ENCODE measurements at regions of chr2 and their contacts with region 1.

Region 1: DNA sequence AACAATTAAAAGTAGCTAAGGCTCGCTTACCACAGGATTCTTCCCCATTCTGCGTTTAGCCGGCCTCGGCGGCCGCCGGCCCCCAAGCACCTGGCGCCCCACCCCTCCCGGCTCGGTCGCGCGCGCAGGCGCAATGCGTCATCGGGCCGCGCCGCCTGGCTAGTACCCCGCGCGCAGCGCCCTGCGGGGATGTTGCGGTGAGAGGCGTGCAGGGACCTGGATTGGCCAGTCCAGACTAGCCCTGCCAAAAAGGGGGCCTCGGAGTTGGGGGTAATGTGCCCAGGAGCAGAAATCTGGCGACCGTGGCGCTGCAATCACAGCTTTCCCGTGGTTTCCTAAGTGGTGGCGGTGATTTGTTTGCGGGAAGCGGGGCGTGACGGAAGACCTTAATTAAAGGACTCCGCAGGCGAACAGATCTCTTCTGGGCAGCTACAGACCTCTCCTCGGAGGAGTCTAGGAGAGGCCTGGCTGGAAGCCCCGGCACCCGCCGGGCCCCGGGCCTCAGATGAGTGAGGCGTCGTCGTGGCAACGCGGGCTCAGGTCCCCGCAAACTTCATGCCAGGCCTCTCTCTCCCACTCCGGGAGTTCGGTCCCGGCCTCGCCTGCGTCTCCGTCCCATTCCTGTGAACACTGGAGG is 606 bp downstream of the TMEM237 start:
- DNase-seq: peak; percentile 81 to 94 (median 92)
- ATAC-seq: peak; percentile 94
- H3K4me3 ChIP-seq: peak overlapping the region; percentile 95
- H3K4me3 Mint-ChIP-seq: peak overlapping the region; percentile 86 to 99 (median 96)
- H3K27ac ChIP-seq: peak overlapping the region; percentile 87
- H3K27ac Mint-ChIP-seq: peak overlapping the region; percentile 76 to 100 (median 97)
- H3K4me1 ChIP-seq: peaks cover 3 to 5% of the 10 kb centered on the region in 2 donors
- H3K4me1 Mint-ChIP-seq: peaks cover 5 to 21% (median 12%) of the 10 kb centered on the region in 7 donors
- H3K27me3 ChIP-seq: no peaks in the 10 kb centered on the region
- H3K27me3 Mint-ChIP-seq: peaks cover 0 to 4% (median 0%) of the 10 kb centered on the region in 5 donors

Region 2: DNA sequence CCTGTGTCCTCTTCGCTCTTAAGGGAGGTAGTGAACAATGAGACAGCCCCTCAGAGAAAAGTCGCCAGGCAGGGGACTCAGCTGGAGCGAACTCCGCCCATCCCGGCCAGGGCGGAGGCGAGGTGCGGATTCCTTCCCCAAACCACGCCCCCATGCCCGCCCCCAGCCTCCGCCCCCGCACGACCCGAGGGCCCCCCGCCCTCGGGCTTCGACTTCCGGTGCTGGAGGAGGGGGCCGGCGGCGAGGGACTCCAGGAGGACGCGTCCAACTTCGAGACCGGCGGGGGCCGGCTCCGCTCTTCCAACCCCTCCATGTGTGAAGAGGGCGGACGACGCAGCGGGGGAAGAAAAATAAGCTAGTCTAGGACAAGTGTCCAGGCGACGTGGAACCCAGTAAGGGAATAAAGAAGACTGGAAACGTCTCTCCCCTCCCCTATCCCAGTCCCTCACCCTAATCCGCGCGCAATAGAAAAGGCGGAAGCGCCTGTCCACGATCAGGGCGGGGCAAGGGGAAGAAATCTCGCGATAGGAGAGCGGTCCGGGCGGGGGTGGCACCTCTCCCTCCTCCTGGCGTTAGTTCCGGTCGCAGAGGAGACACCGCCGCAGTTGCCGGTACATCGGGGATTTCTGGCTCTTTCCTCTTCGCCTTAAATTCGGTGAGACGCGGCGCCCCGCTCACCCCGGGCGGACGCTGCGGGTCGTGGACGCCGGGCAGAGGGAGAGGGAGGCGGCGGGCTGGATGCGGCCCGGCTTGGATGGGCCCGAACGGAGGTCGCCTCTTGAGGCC is 831.2 kb before region 1 on chr2 and contains the start of gene BZW1:
- CTCF ChIA-PET with region 1: no interaction called
- POLR2A ChIA-PET with region 1: no interaction called
- intact Hi-C with region 1: loop called in 1 of 2 experiments (anchors 2 kb)
- DNase-seq: peak; percentile 92 to 99 (median 98)
- ATAC-seq: peak; percentile 91
- H3K4me3 ChIP-seq: peak within 1 kb of the TSS; percentile 89
- H3K4me3 Mint-ChIP-seq: peak within 1 kb of the TSS; percentile 89 to 99 (median 98)
- H3K27ac ChIP-seq: peak within 1 kb of the TSS; percentile 99
- H3K27ac Mint-ChIP-seq: peak within 1 kb of the TSS; percentile 91 to 99 (median 98)
- H3K4me1 ChIP-seq: peaks cover 19 to 24% of the 10 kb centered on the region in 2 donors
- H3K4me1 Mint-ChIP-seq: peaks cover 30 to 56% (median 48%) of the 10 kb centered on the region in 7 donors
- H3K27me3 ChIP-seq: no peaks in the 10 kb centered on the region
- H3K27me3 Mint-ChIP-seq: peaks cover 0 to 2% (median 0%) of the 10 kb centered on the region in 5 donors
- total RNA-seq, gene BZW1: 127 to 246 (median 207) TPM

Region 3: GRCh38 chr2:201406077-201406662 is 236.5 kb before region 1 on chr2:
- CTCF ChIA-PET with region 1: no interaction called
- POLR2A ChIA-PET with region 1: no interaction called
- intact Hi-C with region 1: loop called in 1 of 2 experiments (anchors 5 kb)
- DNase-seq: no peak
- ATAC-seq: no peak
- H3K4me3 ChIP-seq: no peak overlapping the region
- H3K4me3 Mint-ChIP-seq: peak overlapping the region in 4 of 10 donors; percentile 19 to 54 (median 22)
- H3K27ac ChIP-seq: peak overlapping the region; percentile 36
- H3K27ac Mint-ChIP-seq: peak overlapping the region in 5 of 9 donors; percentile 16 to 81 (median 28)
- H3K4me1 ChIP-seq: peaks cover 0 to 21% of the 10 kb centered on the region in 2 donors
- H3K4me1 Mint-ChIP-seq: peaks cover 13 to 61% (median 50%) of the 10 kb centered on the region in 7 donors
- H3K27me3 ChIP-seq: no peaks in the 10 kb centered on the region
- H3K27me3 Mint-ChIP-seq: no peaks in the 10 kb centered on the region

Region 4: DNA sequence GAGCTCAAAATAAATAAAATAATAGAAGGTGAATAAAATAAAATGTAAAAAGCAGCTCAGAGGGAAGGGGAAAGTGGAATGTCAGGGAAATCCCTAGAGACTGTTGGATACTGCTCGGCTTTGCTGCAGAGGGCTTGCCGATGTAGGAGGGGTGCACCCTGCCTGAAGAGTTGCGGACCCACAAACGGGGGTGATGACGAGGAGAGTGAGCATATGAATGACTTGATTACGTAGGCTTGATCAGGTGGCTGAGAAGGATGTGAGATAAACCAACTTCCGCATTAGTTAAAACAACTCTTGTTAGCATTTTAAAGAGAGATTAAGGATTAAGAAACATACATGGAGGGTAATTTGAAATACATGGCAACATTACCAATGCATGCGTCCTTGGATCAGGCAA is 21.6 kb after region 1 on chr2:
- CTCF ChIA-PET with region 1: no interaction called
- POLR2A ChIA-PET with region 1: no interaction called
- intact Hi-C with region 1: no loop called
- DNase-seq: no peak
- ATAC-seq: no peak
- H3K4me3 ChIP-seq: no peak overlapping the region
- H3K4me3 Mint-ChIP-seq: no peak overlapping the region
- H3K27ac ChIP-seq: no peak overlapping the region
- H3K27ac Mint-ChIP-seq: no peak overlapping the region
- H3K4me1 ChIP-seq: no peaks in the 10 kb centered on the region
- H3K4me1 Mint-ChIP-seq: no peaks in the 10 kb centered on the region
- H3K27me3 ChIP-seq: no peaks in the 10 kb centered on the region
- H3K27me3 Mint-ChIP-seq: peaks cover 0 to 8% (median 0%) of the 10 kb centered on the region in 5 donors

Region 5: GRCh38 chr2:202033321-202034248 is 390.9 kb after region 1 on chr2 and contains the start of gene FZD7:
- CTCF ChIA-PET with region 1: no interaction called
- POLR2A ChIA-PET with region 1: no interaction called
- intact Hi-C with region 1: loop called (anchors 1 to 5 kb)
- DNase-seq: peak; percentile 70 to 87 (median 81)
- ATAC-seq: peak; percentile 92
- H3K4me3 ChIP-seq: peak within 1 kb of the TSS; percentile 91
- H3K4me3 Mint-ChIP-seq: peak within 1 kb of the TSS in 9 of 10 donors; percentile 87 to 96 (median 92)
- H3K27ac ChIP-seq: peak within 1 kb of the TSS; percentile 44
- H3K27ac Mint-ChIP-seq: peak within 1 kb of the TSS in 8 of 9 donors; percentile 46 to 83 (median 72)
- H3K4me1 ChIP-seq: peaks cover 9 to 11% of the 10 kb centered on the region in 2 donors
- H3K4me1 Mint-ChIP-seq: peaks cover 6 to 17% (median 14%) of the 10 kb centered on the region in 7 donors
- H3K27me3 ChIP-seq: peaks cover 6 to 22% of the 10 kb centered on the region in 2 donors
- H3K27me3 Mint-ChIP-seq: peaks cover 0 to 45% (median 7%) of the 10 kb centered on the region in 5 donors
- total RNA-seq, gene FZD7: 0.27 to 0.99 (median 0.43) TPM